Calu3 (cell line): ENCODE measurements at regions of chr5 and their contacts with region 1.

Region 1: DNA sequence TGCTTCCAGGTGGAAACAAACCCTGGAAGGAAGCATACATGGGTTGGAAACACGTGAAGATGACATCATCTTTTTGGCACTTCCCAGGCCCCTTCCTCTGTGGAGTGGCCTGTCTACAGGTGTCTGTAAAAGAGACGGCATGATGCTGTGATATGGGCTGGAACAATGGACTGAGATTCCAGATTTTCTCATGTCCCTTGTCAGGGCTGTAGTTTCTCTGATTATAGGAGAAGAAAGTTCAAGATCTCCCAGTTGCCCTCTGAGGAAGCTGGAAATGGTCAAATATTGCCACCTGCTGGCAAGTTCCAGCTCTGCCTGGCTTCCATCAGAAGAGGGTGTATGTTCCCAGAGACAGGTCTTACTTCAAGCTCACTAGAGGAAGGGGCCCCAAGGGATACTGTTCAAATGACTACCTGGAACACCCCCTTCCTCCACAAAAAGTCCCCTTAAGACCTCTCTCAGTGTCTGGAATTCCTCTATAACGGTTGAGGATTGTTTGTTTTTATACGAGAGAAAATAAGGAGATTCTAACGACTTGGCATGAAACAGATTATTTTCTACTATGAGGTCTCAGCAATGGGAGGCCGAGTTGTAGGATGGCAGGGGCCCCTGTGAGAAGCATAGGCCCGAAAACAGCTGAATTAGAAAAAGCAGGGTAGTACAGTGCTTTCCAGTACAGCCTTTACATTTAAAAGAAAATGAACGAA is 7.3 kb upstream of the ANXA6 start:
- DNase-seq: peak; percentile 85
- H3K4me3 Mint-ChIP-seq: no peak overlapping the region
- H3K27ac Mint-ChIP-seq: no peak overlapping the region
- H3K4me1 Mint-ChIP-seq: no peaks in the 10 kb centered on the region
- H3K27me3 Mint-ChIP-seq: peaks cover 7% of the 10 kb centered on the region
- CTCF ChIP-seq: peak; percentile 93

Region 2: GRCh38 chr5:150879358-150879757 is 285.5 kb before region 1 on chr5:
- CTCF ChIA-PET with region 1: no interaction called
- intact Hi-C with region 1: loop called (anchors 10 kb)
- DNase-seq: no peak
- H3K4me3 Mint-ChIP-seq: no peak overlapping the region
- H3K27ac Mint-ChIP-seq: no peak overlapping the region
- H3K4me1 Mint-ChIP-seq: no peaks in the 10 kb centered on the region
- H3K27me3 Mint-ChIP-seq: no peaks in the 10 kb centered on the region
- CTCF ChIP-seq: no peak

Region 3: GRCh38 chr5:151002250-151002649 is 162.6 kb before region 1 on chr5:
- CTCF ChIA-PET with region 1: interaction called, 19 read pairs
- intact Hi-C with region 1: loop called (anchors 1 kb)
- DNase-seq: peak; percentile 52
- H3K4me3 Mint-ChIP-seq: no peak overlapping the region
- H3K27ac Mint-ChIP-seq: no peak overlapping the region
- H3K4me1 Mint-ChIP-seq: no peaks in the 10 kb centered on the region
- H3K27me3 Mint-ChIP-seq: peaks cover 26% of the 10 kb centered on the region
- CTCF ChIP-seq: no peak

Region 4: DNA sequence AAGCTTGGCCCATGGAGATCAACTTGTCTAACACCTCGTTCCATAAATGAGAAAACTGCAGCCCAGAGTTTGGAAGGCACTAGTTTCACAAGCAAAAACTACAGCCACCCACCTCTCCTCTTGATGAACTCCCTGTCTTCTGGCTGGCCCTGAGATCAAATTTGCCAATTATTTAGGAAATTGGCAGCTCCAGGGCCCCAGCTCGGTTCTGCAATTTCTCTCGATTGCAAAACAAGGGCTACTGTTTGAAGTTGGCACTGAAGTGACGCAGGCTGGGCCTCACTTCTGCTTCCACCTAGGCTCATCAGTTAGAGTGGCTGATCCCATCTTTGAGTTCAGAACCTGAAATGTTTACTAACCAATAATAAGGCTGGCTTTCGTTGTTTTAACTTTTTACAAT is 148.1 kb before region 1 on chr5:
- CTCF ChIA-PET with region 1: no interaction called
- intact Hi-C with region 1: no loop called
- DNase-seq: no peak
- H3K4me3 Mint-ChIP-seq: no peak overlapping the region
- H3K27ac Mint-ChIP-seq: no peak overlapping the region
- H3K4me1 Mint-ChIP-seq: no peaks in the 10 kb centered on the region
- H3K27me3 Mint-ChIP-seq: no peaks in the 10 kb centered on the region
- CTCF ChIP-seq: no peak

Region 5: GRCh38 chr5:151051066-151051930 is 113.5 kb before region 1 on chr5:
- CTCF ChIA-PET with region 1: interaction called, 7 read pairs
- intact Hi-C with region 1: loop called (anchors 1 kb)
- DNase-seq: peak; percentile 86
- H3K4me3 Mint-ChIP-seq: no peak overlapping the region
- H3K27ac Mint-ChIP-seq: peak overlapping the region; percentile 2
- H3K4me1 Mint-ChIP-seq: peaks cover 65% of the 10 kb centered on the region
- H3K27me3 Mint-ChIP-seq: no peaks in the 10 kb centered on the region
- CTCF ChIP-seq: peak; percentile 88

Region 6: GRCh38 chr5:151126199-151126645 is 38.6 kb before region 1 on chr5:
- CTCF ChIA-PET with region 1: interaction called, 106 read pairs
- intact Hi-C with region 1: loop called (anchors 1 kb)
- DNase-seq: peak; percentile 86
- H3K4me3 Mint-ChIP-seq: no peak overlapping the region
- H3K27ac Mint-ChIP-seq: no peak overlapping the region
- H3K4me1 Mint-ChIP-seq: peaks cover 11% of the 10 kb centered on the region
- H3K27me3 Mint-ChIP-seq: no peaks in the 10 kb centered on the region
- CTCF ChIP-seq: peak; percentile 91

Region 7: GRCh38 chr5:151298063-151298855 is 133.4 kb after region 1 on chr5:
- CTCF ChIA-PET with region 1: no interaction called
- intact Hi-C with region 1: loop called (anchors 10 kb)
- DNase-seq: peak; percentile 51
- H3K4me3 Mint-ChIP-seq: no peak overlapping the region
- H3K27ac Mint-ChIP-seq: no peak overlapping the region
- H3K4me1 Mint-ChIP-seq: peaks cover 27% of the 10 kb centered on the region
- H3K27me3 Mint-ChIP-seq: peaks cover 78% of the 10 kb centered on the region
- CTCF ChIP-seq: no peak